Activated naive CD4-positive, alpha-beta T cell treated with anti-CD3 and anti-CD28 coated beads for 36 hours (primary cell): ENCODE measurements at regions of chr11 and their contacts with region 1.

Region 1: DNA sequence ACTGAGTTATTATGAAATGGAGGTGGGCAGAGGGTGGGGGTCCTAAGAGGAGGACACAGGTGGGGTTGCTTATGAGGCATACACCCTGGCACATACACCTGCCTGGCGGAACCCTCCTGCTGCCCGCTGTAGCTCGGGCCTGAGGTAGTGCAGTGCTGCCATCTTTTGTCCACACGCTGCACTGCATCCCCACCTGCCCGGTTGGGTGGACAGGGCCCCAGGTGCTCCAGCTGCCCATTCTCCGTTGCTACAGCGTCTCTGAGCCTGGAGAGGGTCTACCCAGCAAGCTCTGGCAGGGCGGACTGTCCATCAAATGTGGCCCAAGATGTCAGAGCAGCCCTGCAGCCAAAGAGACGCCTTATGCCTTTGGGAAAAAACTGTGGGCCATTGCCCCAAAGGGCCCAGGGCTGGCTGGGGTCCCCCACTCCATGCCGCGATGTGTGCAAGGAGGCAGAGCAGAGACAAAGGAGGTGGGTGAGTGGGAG is 131.2 kb downstream of the BUD13 start:
- DNase-seq: peak; percentile 49
- H3K4me3 Mint-ChIP-seq: no peak overlapping the region
- H3K27ac Mint-ChIP-seq: no peak overlapping the region
- H3K4me1 Mint-ChIP-seq: no peaks in the 10 kb centered on the region
- H3K27me3 Mint-ChIP-seq: peaks cover 2% of the 10 kb centered on the region

Region 2: DNA sequence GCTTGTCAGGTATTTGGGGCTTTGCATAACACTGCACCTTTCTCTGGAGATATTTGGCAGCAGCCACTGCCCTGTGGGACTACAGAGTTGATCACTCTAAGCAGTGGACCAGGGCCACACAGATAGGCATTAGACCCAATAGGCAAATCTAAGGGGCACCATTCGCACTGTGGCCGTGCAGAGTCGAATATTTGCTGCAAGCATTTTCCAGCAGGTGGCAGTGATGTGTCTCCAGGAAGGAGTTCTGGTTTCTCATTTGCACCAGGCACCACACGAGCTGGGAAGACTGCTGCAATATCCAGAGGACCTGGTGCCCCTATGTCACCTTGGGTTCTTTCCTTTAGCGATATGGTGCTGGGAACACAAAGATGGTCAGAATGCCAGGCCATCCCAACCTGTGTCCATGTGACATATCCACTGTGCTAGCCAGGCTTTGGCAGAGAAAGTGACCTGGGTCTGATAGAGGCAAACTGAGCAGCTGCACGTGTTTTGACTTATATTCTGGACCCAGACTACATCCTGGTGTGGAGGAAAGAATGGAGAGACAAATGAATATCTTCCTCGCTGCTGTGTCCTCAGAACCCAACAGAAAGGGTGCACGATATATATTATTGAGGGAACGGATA is 187.5 kb before region 1 on chr11:
- CTCF ChIA-PET with region 1: interaction called, 9 read pairs
- intact Hi-C with region 1: loop called (anchors 5 kb)
- DNase-seq: peak; percentile 46
- H3K4me3 Mint-ChIP-seq: no peak overlapping the region
- H3K27ac Mint-ChIP-seq: no peak overlapping the region
- H3K4me1 Mint-ChIP-seq: no peaks in the 10 kb centered on the region
- H3K27me3 Mint-ChIP-seq: peaks cover 13% of the 10 kb centered on the region

Region 3: GRCh38 chr11:116513894-116514293 is 127.7 kb before region 1 on chr11:
- CTCF ChIA-PET with region 1: interaction called, 6 read pairs
- intact Hi-C with region 1: loop called (anchors 1 kb)
- DNase-seq: peak; percentile 60
- H3K4me3 Mint-ChIP-seq: no peak overlapping the region
- H3K27ac Mint-ChIP-seq: no peak overlapping the region
- H3K4me1 Mint-ChIP-seq: no peaks in the 10 kb centered on the region
- H3K27me3 Mint-ChIP-seq: peaks cover 8% of the 10 kb centered on the region